Activated naive CD4-positive, alpha-beta T cell treated with anti-CD3 and anti-CD28 coated beads for 36 hours (primary cell): ENCODE measurements at regions of chr2 and their contacts with region 1.

Region 1: DNA sequence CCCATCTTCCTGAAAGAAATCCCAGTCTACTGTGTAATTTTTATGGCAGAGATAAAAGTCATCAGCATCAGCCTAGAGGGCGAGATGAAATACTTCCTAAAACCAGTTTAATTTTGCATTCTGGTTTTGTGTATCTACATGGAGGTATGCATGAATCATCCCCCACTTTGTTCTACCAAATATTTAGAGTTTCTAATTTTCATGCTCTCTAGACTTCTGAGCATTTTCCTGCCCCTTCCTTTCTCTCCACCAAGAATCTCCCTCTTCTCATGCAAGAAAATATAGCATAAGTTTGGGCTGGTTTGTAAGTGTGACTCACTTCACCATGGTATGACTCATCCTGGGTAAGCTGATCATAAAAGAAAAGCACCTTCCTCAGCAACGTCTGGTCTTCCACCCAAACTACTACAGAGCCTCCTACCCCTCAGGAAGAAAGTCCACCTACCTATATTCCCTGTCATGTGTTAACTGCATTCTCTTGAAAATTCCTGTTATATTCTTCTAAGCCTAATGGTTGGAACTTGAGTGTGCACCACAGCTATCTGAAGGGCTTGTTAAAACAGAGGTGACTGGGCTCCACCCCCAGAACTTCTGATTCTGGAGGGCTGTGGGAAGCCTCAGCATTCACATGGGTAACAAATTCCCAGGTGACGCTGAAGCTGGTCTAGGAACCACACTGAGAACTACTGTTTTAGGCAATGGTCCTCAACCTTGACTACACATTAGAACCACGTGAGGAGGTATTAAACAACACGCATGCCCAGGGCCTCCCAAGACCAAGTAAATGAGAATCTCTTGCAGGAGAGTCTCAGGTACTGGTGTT is 37.4 kb upstream of the RAPGEF4 start:
- DNase-seq: peak; percentile 41
- H3K4me3 Mint-ChIP-seq: no peak overlapping the region
- H3K27ac Mint-ChIP-seq: no peak overlapping the region
- H3K4me1 Mint-ChIP-seq: peaks cover 25% of the 10 kb centered on the region
- H3K27me3 Mint-ChIP-seq: no peaks in the 10 kb centered on the region

Region 2: GRCh38 chr2:172496160-172496608 is 202.1 kb before region 1 on chr2:
- CTCF ChIA-PET with region 1: interaction called, 3 read pairs
- intact Hi-C with region 1: loop called (anchors 10 kb)
- DNase-seq: peak; percentile 61
- H3K4me3 Mint-ChIP-seq: peak overlapping the region; percentile 38
- H3K27ac Mint-ChIP-seq: peak overlapping the region; percentile 91
- H3K4me1 Mint-ChIP-seq: peaks cover 73% of the 10 kb centered on the region
- H3K27me3 Mint-ChIP-seq: no peaks in the 10 kb centered on the region

Region 3: DNA sequence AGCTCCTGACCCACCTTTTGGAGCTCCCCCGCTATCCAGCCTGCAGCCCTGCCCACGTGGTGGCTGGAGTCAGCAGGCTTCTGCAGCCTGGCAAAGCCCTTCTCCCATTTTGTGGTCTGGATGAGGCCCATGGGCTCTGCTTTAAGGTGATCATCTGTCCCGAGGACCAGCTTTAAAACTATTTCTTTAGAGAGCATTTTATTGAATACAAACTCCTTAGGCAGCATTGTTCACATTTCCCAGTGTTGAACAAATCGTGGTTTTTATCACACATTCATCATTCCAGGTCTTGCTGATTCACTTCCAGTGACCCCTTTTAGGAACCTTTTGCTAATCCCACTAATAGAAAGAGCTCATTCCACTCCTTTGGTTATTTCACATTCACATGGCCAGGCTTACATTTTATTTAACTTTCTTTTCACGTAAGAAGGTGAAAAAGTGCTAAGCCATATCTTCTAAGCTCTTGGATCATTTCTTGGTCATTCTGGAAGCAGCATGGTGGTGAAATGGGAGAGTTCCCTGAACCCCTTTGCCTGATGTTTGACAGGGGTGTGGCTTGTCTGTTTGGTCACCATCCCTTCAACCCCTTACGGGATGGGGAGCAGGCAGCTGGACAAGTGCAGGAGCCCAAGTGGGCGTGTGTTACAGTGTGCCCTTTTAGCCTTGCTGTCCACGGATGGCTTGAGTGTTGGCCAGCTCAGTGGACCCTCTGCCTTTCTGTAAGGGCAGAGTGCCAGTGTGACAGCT is 43.0 kb before region 1 on chr2:
- CTCF ChIA-PET with region 1: no interaction called
- intact Hi-C with region 1: no loop called
- DNase-seq: no peak
- H3K4me3 Mint-ChIP-seq: no peak overlapping the region
- H3K27ac Mint-ChIP-seq: no peak overlapping the region
- H3K4me1 Mint-ChIP-seq: peaks cover 3% of the 10 kb centered on the region
- H3K27me3 Mint-ChIP-seq: no peaks in the 10 kb centered on the region

Region 4: GRCh38 chr2:172894689-172895387 is 196.6 kb after region 1 on chr2:
- CTCF ChIA-PET with region 1: no interaction called
- intact Hi-C with region 1: no loop called
- DNase-seq: no peak
- H3K4me3 Mint-ChIP-seq: no peak overlapping the region
- H3K27ac Mint-ChIP-seq: no peak overlapping the region
- H3K4me1 Mint-ChIP-seq: no peaks in the 10 kb centered on the region
- H3K27me3 Mint-ChIP-seq: peaks cover 19% of the 10 kb centered on the region